H1 (cell line): ENCODE measurements at regions of chr18 and their contacts with region 1.

Region 1: GRCh38 chr18:74963820-74964446 is 245.0 kb downstream of the PTGR3 start:
- DNase-seq: peak in 1 of 2 experiments; percentile 10
- H3K4me3 ChIP-seq: no peak overlapping the region
- H3K27ac ChIP-seq: no peak overlapping the region
- H3K4me1 ChIP-seq: no peaks in the 10 kb centered on the region; a peak in 1 of 7 replicates
- H3K27me3 ChIP-seq: no peaks in the 10 kb centered on the region
- CTCF ChIP-seq: peak in 2 of 3 experiments; percentile 64 to 66; a peak in 3 of 4 replicates
- EP300 ChIP-seq: no peak
- POLR2A ChIP-seq: no peak
- RAD21 ChIP-seq: peak; percentile 68 to 75

Region 2: DNA sequence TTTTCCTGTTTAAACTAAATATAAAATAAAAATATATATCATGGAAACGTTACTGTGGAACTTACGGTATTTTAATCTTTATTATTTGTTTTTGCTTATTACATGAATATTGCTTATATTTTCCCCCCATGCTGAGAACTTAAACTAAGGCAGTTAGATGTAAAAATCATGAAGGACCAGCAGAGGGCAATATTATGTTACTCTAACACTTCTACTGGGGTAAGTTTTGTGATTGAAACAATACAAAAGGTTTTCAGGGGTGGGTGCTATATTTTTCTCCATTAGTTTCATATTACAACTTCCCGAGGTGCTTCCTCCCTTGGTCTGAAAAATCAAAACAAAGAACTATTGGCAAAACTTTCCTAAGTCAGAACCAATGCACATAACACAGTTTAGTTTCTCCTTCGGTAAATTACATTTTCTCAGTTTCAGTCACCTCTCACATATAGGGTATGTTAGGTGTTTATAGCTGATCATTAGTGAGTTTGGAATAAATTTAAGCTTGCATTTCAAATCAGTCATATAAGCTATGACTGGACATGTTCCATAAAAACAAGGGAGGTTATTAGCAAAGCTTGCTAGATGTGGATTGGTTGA is 311.4 kb before region 1 on chr18:
- CTCF ChIA-PET with region 1: interaction called, 10 read pairs
- POLR2A ChIA-PET with region 1: no interaction called
- DNase-seq: no peak
- H3K4me3 ChIP-seq: no peak overlapping the region
- H3K27ac ChIP-seq: no peak overlapping the region
- H3K4me1 ChIP-seq: peaks cover 0 to 3% (median 1%) of the 10 kb centered on the region in 4 experiments; a peak in 2 of 7 replicates
- H3K27me3 ChIP-seq: no peaks in the 10 kb centered on the region
- CTCF ChIP-seq: peak in 2 of 3 experiments; percentile 22 to 41; a peak in 2 of 4 replicates
- EP300 ChIP-seq: no peak
- POLR2A ChIP-seq: no peak
- RAD21 ChIP-seq: peak; percentile 62 to 64

Region 3: DNA sequence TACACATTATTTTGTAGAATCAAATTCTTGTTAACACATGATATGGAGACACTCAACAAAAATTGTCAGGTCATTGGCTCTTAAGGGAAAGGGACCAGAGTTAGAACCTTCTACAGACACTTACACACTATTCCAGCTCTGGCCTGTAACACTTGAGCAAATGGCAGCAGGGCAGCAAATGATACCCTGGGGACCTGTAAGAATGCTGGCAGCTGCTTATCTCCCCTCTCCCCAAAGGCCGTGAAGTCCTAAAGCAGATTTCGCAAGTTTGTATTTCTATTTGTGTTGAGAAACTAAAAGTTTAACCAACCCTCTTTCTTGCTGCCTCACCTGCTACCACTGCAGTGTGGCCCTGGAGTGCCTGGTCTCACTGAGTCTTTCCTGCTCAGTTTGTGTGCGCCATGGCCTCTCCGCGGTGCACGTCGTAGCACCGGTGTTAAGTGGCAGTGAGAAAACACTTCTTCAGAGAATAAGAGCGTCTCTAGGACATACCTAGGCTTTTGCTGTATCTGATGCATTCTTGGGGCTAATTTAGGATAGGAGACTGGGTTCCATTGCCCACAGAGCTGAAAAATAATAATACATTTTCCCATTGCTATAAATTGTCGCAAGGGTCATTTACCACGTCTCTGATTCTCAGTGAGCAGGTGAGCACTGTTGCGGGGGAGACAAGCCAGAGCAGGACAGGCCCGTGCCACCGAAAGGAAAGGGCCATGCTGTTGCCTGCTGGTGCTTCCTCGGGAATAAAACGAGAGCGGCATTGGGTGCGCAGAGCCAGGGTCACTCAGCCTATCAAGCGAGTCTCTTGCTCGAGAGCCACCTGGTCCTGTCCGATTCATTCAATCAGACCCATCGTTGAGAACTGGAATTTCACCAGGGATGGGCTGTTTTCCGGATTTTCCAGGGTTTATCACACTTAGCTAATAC is 40.1 kb after region 1 on chr18:
- CTCF ChIA-PET with region 1: no interaction called
- POLR2A ChIA-PET with region 1: no interaction called
- DNase-seq: no peak
- H3K4me3 ChIP-seq: no peak overlapping the region
- H3K27ac ChIP-seq: no peak overlapping the region
- H3K4me1 ChIP-seq: peaks cover 0 to 2% (median 0%) of the 10 kb centered on the region in 4 experiments; a peak in 2 of 7 replicates
- H3K27me3 ChIP-seq: no peaks in the 10 kb centered on the region
- CTCF ChIP-seq: no peak
- EP300 ChIP-seq: no peak
- POLR2A ChIP-seq: no peak
- RAD21 ChIP-seq: no peak